ENCODE measurements at regions of chr10 and their contacts with region 1.

Region 1: GRCh38 chr10:63465293-63466143 is at the start of gene JMJD1C:
- DNase-seq: peak; percentile 88 to 90
- ATAC-seq: peak; percentile 90 to 93 (median 90)
- H3K4me3 ChIP-seq: peak within 1 kb of the TSS; percentile 81
- H3K27ac ChIP-seq: peak within 1 kb of the TSS; percentile 92
- H3K4me1 ChIP-seq: peaks cover 27% of the 10 kb centered on the region
- H3K27me3 ChIP-seq: no peaks in the 10 kb centered on the region
- CTCF ChIP-seq: peak; percentile 2
- total RNA-seq, gene JMJD1C: 23.3 to 74.4 (median 30.3) TPM

Region 2: GRCh38 chr10:63210611-63211196 is 254.8 kb before region 1 on chr10:
- intact Hi-C with region 1: loop called (anchors 5 kb)
- DNase-seq: no peak
- ATAC-seq: peak; percentile 27 to 64 (median 56)
- H3K4me3 ChIP-seq: no peak overlapping the region
- H3K27ac ChIP-seq: peak overlapping the region; percentile 24
- H3K4me1 ChIP-seq: peaks cover 47% of the 10 kb centered on the region
- H3K27me3 ChIP-seq: no peaks in the 10 kb centered on the region
- CTCF ChIP-seq: no peak

Region 3: GRCh38 chr10:63268798-63269503 is 196.6 kb before region 1 on chr10:
- intact Hi-C with region 1: loop called (anchors 1 to 10 kb)
- DNase-seq: peak; percentile 65 to 84
- ATAC-seq: peak; percentile 95 to 99 (median 96)
- H3K4me3 ChIP-seq: peak overlapping the region; percentile 86
- H3K27ac ChIP-seq: peak overlapping the region; percentile 98
- H3K4me1 ChIP-seq: peaks cover 14% of the 10 kb centered on the region
- H3K27me3 ChIP-seq: no peaks in the 10 kb centered on the region
- CTCF ChIP-seq: peak; percentile 47

Region 4: GRCh38 chr10:63521416-63522276 is 56.1 kb after region 1 on chr10:
- intact Hi-C with region 1: loop called in 1 of 2 experiments (anchors 5 kb)
- DNase-seq: peak; percentile 76 to 86
- ATAC-seq: peak; percentile 84 to 87 (median 86)
- H3K4me3 ChIP-seq: peak overlapping the region; percentile 83
- H3K27ac ChIP-seq: peak overlapping the region; percentile 98
- H3K4me1 ChIP-seq: peaks cover 53% of the 10 kb centered on the region
- H3K27me3 ChIP-seq: no peaks in the 10 kb centered on the region
- CTCF ChIP-seq: no peak

Region 5: GRCh38 chr10:63603709-63604445 is 138.4 kb after region 1 on chr10:
- intact Hi-C with region 1: no loop called
- DNase-seq: no peak
- ATAC-seq: no peak
- H3K4me3 ChIP-seq: no peak overlapping the region
- H3K27ac ChIP-seq: no peak overlapping the region
- H3K4me1 ChIP-seq: peaks cover 6% of the 10 kb centered on the region
- H3K27me3 ChIP-seq: no peaks in the 10 kb centered on the region
- CTCF ChIP-seq: no peak

Measured in psoas muscle (tissue), 8 donors.